Activated CD4-positive, alpha-beta T cell treated with anti-CD3 and anti-CD28 coated beads for 36 hours (primary cell): ENCODE measurements at regions of chr1 and their contacts with region 1.

Region 1: DNA sequence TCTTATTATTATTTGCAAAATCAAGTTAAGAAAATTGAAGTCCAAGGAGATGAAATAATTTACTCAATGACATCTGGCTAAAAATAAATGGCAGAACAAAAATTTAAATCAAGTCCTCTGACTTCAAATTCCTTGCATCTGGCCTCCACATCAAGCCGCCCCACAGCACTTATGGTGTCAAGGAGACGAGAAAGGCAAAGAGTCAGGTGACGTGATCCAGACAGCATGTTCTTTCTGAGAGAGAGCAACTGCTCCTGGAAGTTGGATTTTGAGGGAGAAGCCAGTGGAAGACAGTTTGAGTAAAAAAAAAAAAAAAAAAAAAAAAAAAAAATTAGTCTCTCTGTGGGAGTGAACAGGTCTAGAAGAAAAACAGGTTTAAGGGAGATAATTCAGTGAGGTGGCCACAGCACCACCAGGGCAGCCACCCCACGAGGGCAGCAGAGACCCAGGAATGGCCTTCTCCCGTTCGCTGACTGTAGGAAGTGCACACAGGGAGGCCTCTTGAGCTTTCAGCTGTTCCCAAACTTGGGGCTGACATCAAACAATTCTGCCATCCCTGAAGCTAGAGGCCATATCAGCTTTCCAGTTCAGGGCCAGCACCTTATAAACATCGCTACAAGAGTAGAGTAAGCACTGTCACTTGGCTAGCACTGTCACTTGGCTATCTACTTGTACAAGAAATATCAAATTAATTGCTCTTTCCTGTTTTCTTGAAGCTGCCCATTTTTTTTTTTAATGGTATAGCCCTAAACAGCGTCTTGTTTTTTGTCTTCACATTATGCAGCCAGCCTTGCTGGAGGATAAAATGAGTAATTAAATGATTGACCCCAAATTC is 7.8 kb downstream of the C1orf162 start:
- DNase-seq: peak; percentile 83
- ATAC-seq: peak; percentile 80
- H3K4me3 Mint-ChIP-seq: no peak overlapping the region
- H3K27ac Mint-ChIP-seq: no peak overlapping the region
- H3K4me1 Mint-ChIP-seq: peaks cover 24% of the 10 kb centered on the region
- H3K27me3 Mint-ChIP-seq: no peaks in the 10 kb centered on the region

Region 2: GRCh38 chr1:111747282-111747734 is 265.7 kb after region 1 on chr1:
- CTCF ChIA-PET with region 1: interaction called, 24 read pairs
- POLR2A ChIA-PET with region 1: no interaction called
- intact Hi-C with region 1: loop called (anchors 1 kb)
- DNase-seq: peak; percentile 86
- ATAC-seq: peak; percentile 98
- H3K4me3 Mint-ChIP-seq: no peak overlapping the region
- H3K27ac Mint-ChIP-seq: no peak overlapping the region
- H3K4me1 Mint-ChIP-seq: peaks cover 2% of the 10 kb centered on the region
- H3K27me3 Mint-ChIP-seq: peaks cover 5% of the 10 kb centered on the region